ENCODE measurements at regions of chr3 and their contacts with region 1.

Region 1: GRCh38 chr3:153221748-153222162 is 59.7 kb downstream of the RAP2B start:
- DNase-seq: peak; percentile 56 to 92 (median 76)
- ATAC-seq: peak; percentile 97 to 99 (median 99)
- H3K4me3 ChIP-seq: peak overlapping the region; percentile 16 to 35
- H3K4me3 Mint-ChIP-seq: peak overlapping the region; percentile 59 to 74 (median 69)
- H3K27ac ChIP-seq: peak overlapping the region; percentile 96
- H3K27ac Mint-ChIP-seq: peak overlapping the region; percentile 93 to 97
- H3K4me1 ChIP-seq: peaks cover 44 to 47% of the 10 kb centered on the region in 2 experiments
- H3K4me1 Mint-ChIP-seq: peaks cover 68 to 72% (median 70%) of the 10 kb centered on the region in 3 donors
- H3K27me3 ChIP-seq: no peaks in the 10 kb centered on the region
- H3K27me3 Mint-ChIP-seq: no peaks in the 10 kb centered on the region

Region 2: DNA sequence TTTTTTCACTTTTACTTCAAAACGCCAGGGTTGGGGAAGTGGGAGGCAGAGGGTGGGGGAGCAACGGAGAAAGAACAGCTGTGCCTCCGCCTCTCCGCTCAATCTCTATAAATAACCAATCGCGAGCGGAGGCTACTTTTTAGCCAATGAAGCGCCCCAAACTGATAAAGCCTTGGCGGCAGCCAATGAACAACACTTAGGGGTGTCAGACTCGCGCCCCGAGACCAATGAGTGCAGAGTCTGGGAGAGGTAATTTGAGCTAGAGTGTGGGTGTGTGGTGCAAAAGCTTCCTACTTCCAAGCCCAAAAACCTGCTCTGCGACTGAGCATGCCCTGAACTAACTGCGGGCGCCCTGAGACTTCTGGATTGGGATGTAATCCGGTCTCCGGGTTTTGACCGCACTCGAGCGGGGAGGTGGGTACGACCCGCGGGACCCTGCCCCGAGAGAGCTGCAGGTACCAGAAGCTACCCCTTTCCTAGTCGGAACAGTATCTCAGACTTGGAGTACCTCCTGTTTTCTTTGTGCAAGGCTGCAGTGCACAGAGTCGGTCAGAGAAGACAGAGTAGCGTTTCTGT is 60.5 kb before region 1 on chr3:
- CTCF ChIA-PET with region 1: interaction called, 3 to 16 read pairs
- POLR2A ChIA-PET with region 1: interaction called, 4 to 7 read pairs
- DNase-seq: peak; percentile 71 to 95 (median 90)
- ATAC-seq: peak; percentile 75 to 84 (median 80)
- H3K4me3 ChIP-seq: peak overlapping the region; percentile 70 to 88
- H3K4me3 Mint-ChIP-seq: peak overlapping the region; percentile 96 to 99 (median 98)
- H3K27ac ChIP-seq: peak overlapping the region; percentile 77
- H3K27ac Mint-ChIP-seq: peak overlapping the region; percentile 96
- H3K4me1 ChIP-seq: peaks cover 11 to 29% of the 10 kb centered on the region in 2 experiments
- H3K4me1 Mint-ChIP-seq: peaks cover 31 to 38% (median 37%) of the 10 kb centered on the region in 3 donors
- H3K27me3 ChIP-seq: no peaks in the 10 kb centered on the region
- H3K27me3 Mint-ChIP-seq: no peaks in the 10 kb centered on the region

Region 3: GRCh38 chr3:153209596-153209995 is 12.2 kb before region 1 on chr3:
- CTCF ChIA-PET with region 1: interaction called, 4 read pairs
- POLR2A ChIA-PET with region 1: interaction called, 5 to 10 read pairs
- DNase-seq: peak in 2 of 35 experiments; percentile 19 to 20
- ATAC-seq: no peak
- H3K4me3 ChIP-seq: no peak overlapping the region
- H3K4me3 Mint-ChIP-seq: peak overlapping the region in 2 of 3 donors; percentile 19 to 54
- H3K27ac ChIP-seq: no peak overlapping the region
- H3K27ac Mint-ChIP-seq: peak overlapping the region; percentile 75 to 82
- H3K4me1 ChIP-seq: peaks cover 8 to 15% of the 10 kb centered on the region in 2 experiments
- H3K4me1 Mint-ChIP-seq: peaks cover 37 to 47% (median 37%) of the 10 kb centered on the region in 3 donors
- H3K27me3 ChIP-seq: no peaks in the 10 kb centered on the region
- H3K27me3 Mint-ChIP-seq: no peaks in the 10 kb centered on the region

Region 4: DNA sequence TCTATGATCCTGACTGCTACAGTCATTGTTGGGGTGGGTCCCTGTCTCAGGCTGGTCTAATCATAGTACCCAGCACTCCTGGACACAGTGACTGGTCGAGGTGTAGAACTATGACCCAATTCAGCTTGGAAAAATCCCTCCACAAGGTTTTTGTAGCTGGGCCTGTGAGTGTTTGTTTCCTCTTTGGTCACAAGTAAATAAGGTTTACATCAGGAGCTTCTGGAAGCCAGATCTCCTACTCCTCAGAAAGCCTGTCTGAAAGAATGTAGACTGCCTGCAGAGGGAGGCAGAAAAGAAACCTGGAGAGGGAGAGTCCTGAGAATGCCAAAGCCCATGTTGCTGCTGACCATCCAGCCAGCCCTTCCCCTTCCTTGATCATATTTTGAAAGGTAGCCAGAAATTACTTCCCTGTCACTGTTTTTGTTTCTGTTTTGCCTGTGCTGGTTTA is 63.5 kb after region 1 on chr3:
- CTCF ChIA-PET with region 1: interaction called, 7 to 11 read pairs
- POLR2A ChIA-PET with region 1: no interaction called
- DNase-seq: no peak
- ATAC-seq: no peak
- H3K4me3 ChIP-seq: no peak overlapping the region
- H3K4me3 Mint-ChIP-seq: no peak overlapping the region
- H3K27ac ChIP-seq: peak overlapping the region; percentile 8
- H3K27ac Mint-ChIP-seq: peak overlapping the region; percentile 83 to 88
- H3K4me1 ChIP-seq: peaks cover 13 to 14% of the 10 kb centered on the region in 2 experiments
- H3K4me1 Mint-ChIP-seq: peaks cover 50 to 52% (median 50%) of the 10 kb centered on the region in 3 donors
- H3K27me3 ChIP-seq: no peaks in the 10 kb centered on the region
- H3K27me3 Mint-ChIP-seq: no peaks in the 10 kb centered on the region

Measured in T-cell (primary cell).